HepG2 (cell line): ENCODE measurements at regions of chr4 and their contacts with region 1.

Region 1: GRCh38 chr4:53119680-53120079 is 246.2 kb downstream of the SCFD2 start:
- DNase-seq: peak; percentile 40
- ATAC-seq: peak; percentile 57
- H3K4me3 ChIP-seq: no peak overlapping the region
- H3K27ac ChIP-seq: peak overlapping the region; percentile 9
- H3K4me1 ChIP-seq: peaks cover 54% of the 10 kb centered on the region
- H3K27me3 ChIP-seq: no peaks in the 10 kb centered on the region
- CTCF ChIP-seq: no peak
- EP300 ChIP-seq: no peak
- POLR2A ChIP-seq: no peak
- RAD21 ChIP-seq: no peak

Region 2: GRCh38 chr4:52712172-52712990 is 407.3 kb before region 1 on chr4:
- CTCF ChIA-PET with region 1: no interaction called
- POLR2A ChIA-PET with region 1: no interaction called
- in situ Hi-C with region 1: no loop called
- intact Hi-C with region 1: no loop called
- DNase-seq: peak; percentile 92
- ATAC-seq: peak; percentile 96
- H3K4me3 ChIP-seq: peak overlapping the region; percentile 76 to 83 (median 83)
- H3K27ac ChIP-seq: peak overlapping the region; percentile 91
- H3K4me1 ChIP-seq: peaks cover 45% of the 10 kb centered on the region
- H3K27me3 ChIP-seq: peaks cover 0 to 1% of the 10 kb centered on the region in 2 experiments; a peak in 1 of 5 replicates
- CTCF ChIP-seq: no peak
- EP300 ChIP-seq: no peak; a peak in 1 of 4 replicates
- POLR2A ChIP-seq: peak; percentile 92 to 93
- RAD21 ChIP-seq: peak; percentile 66; the same call in 1 of the 2 replicates

Region 3: GRCh38 chr4:53075162-53075785 is 44.4 kb before region 1 on chr4:
- CTCF ChIA-PET with region 1: no interaction called
- POLR2A ChIA-PET with region 1: no interaction called
- in situ Hi-C with region 1: no loop called
- intact Hi-C with region 1: loop called (anchors 5 kb)
- DNase-seq: no peak
- ATAC-seq: no peak
- H3K4me3 ChIP-seq: no peak overlapping the region
- H3K27ac ChIP-seq: no peak overlapping the region
- H3K4me1 ChIP-seq: no peaks in the 10 kb centered on the region
- H3K27me3 ChIP-seq: no peaks in the 10 kb centered on the region
- CTCF ChIP-seq: no peak
- EP300 ChIP-seq: no peak
- POLR2A ChIP-seq: no peak
- RAD21 ChIP-seq: no peak

Region 4: GRCh38 chr4:53098681-53099121 is 21.0 kb before region 1 on chr4:
- CTCF ChIA-PET with region 1: no interaction called
- POLR2A ChIA-PET with region 1: no interaction called
- in situ Hi-C with region 1: no loop called
- intact Hi-C with region 1: no loop called
- DNase-seq: no peak
- ATAC-seq: no peak
- H3K4me3 ChIP-seq: no peak overlapping the region
- H3K27ac ChIP-seq: no peak overlapping the region
- H3K4me1 ChIP-seq: no peaks in the 10 kb centered on the region
- H3K27me3 ChIP-seq: no peaks in the 10 kb centered on the region
- CTCF ChIP-seq: no peak
- EP300 ChIP-seq: no peak
- POLR2A ChIP-seq: no peak
- RAD21 ChIP-seq: no peak

Region 5: DNA sequence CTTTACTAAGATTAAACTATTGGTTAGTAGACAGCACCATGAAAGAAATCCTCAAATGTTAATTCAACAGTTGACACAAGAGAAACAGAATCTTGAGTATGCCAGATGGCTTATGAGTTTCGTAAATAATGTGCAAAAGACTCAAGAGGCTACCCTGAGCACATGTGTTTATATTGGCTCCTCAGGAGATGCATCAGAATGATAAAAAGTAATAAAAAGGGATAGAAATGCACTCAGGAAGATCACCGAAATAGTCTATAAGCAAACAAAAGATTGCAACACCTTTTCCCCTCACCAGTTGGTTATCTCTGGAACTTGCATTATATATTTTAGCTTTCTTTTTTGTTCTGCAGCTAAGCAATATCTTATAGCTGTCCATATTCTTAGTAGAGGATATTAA is 161.8 kb after region 1 on chr4:
- CTCF ChIA-PET with region 1: no interaction called
- POLR2A ChIA-PET with region 1: no interaction called
- in situ Hi-C with region 1: no loop called
- intact Hi-C with region 1: loop called (anchors 10 kb)
- DNase-seq: no peak
- ATAC-seq: no peak
- H3K4me3 ChIP-seq: no peak overlapping the region
- H3K27ac ChIP-seq: no peak overlapping the region
- H3K4me1 ChIP-seq: no peaks in the 10 kb centered on the region
- H3K27me3 ChIP-seq: no peaks in the 10 kb centered on the region
- CTCF ChIP-seq: no peak
- EP300 ChIP-seq: no peak
- POLR2A ChIP-seq: no peak
- RAD21 ChIP-seq: no peak

Region 6: GRCh38 chr4:53313510-53313909 is 193.8 kb after region 1 on chr4:
- CTCF ChIA-PET with region 1: no interaction called
- POLR2A ChIA-PET with region 1: no interaction called
- in situ Hi-C with region 1: no loop called
- intact Hi-C with region 1: no loop called
- DNase-seq: peak; percentile 43
- ATAC-seq: peak; percentile 86
- H3K4me3 ChIP-seq: no peak overlapping the region
- H3K27ac ChIP-seq: no peak overlapping the region
- H3K4me1 ChIP-seq: no peaks in the 10 kb centered on the region
- H3K27me3 ChIP-seq: no peaks in the 10 kb centered on the region
- CTCF ChIP-seq: peak; percentile 62
- EP300 ChIP-seq: no peak
- POLR2A ChIP-seq: no peak
- RAD21 ChIP-seq: no peak

Region 7: DNA sequence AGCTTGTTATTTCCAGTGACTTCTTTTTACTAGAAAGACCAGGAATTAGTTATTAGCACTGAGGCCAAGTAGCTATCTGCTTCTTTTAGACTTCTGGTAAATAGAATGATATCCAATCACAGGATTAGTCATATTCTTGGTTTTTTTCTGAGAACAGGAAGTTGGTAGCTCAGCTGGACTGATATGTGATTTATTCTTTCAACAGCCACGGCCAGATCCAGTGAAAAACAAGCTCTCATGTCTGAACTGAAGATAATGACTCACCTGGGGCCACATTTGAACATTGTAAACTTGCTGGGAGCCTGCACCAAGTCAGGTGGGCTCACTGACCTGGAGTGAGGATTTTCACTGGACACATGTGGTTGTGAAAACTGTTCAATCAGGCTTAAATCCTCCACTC is 1158.0 kb after region 1 on chr4:
- CTCF ChIA-PET with region 1: no interaction called
- POLR2A ChIA-PET with region 1: no interaction called
- in situ Hi-C with region 1: no loop called
- intact Hi-C with region 1: no loop called
- DNase-seq: no peak
- ATAC-seq: no peak
- H3K4me3 ChIP-seq: no peak overlapping the region
- H3K27ac ChIP-seq: no peak overlapping the region
- H3K4me1 ChIP-seq: no peaks in the 10 kb centered on the region
- H3K27me3 ChIP-seq: no peaks in the 10 kb centered on the region
- CTCF ChIP-seq: no peak
- EP300 ChIP-seq: no peak
- POLR2A ChIP-seq: no peak
- RAD21 ChIP-seq: no peak